Endothelial cell of umbilical vein (primary cell): ENCODE measurements at regions of chr1 and their contacts with region 1.

Region 1: DNA sequence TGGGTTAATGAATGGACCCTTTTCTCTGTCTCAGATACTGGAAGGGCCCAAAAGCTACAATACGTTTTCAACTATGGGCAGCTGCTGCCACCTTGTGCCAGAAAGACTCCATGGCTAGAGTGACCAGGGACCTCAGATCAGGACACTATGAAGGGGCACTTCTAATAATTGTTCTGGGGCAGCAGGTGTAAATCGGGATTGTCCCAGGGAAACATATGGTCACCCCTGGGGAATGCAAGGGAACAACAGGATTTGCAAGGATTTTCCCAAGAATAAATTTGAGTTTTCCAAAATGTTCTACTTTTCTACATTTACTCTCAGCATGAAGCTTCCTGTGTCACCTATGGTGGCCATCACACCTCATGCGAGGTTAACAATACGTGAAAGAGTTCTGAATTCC is 12.0 kb upstream of the FCAMR start:
- DNase-seq: peak; percentile 27
- H3K4me3 ChIP-seq: no peak overlapping the region
- H3K27ac ChIP-seq: no peak overlapping the region
- H3K4me1 ChIP-seq: no peaks in the 10 kb centered on the region
- H3K27me3 ChIP-seq: peaks cover 6 to 12% of the 10 kb centered on the region in 2 experiments
- CTCF ChIP-seq: peak; percentile 27 to 44
- POLR2A ChIP-seq: no peak

Region 2: DNA sequence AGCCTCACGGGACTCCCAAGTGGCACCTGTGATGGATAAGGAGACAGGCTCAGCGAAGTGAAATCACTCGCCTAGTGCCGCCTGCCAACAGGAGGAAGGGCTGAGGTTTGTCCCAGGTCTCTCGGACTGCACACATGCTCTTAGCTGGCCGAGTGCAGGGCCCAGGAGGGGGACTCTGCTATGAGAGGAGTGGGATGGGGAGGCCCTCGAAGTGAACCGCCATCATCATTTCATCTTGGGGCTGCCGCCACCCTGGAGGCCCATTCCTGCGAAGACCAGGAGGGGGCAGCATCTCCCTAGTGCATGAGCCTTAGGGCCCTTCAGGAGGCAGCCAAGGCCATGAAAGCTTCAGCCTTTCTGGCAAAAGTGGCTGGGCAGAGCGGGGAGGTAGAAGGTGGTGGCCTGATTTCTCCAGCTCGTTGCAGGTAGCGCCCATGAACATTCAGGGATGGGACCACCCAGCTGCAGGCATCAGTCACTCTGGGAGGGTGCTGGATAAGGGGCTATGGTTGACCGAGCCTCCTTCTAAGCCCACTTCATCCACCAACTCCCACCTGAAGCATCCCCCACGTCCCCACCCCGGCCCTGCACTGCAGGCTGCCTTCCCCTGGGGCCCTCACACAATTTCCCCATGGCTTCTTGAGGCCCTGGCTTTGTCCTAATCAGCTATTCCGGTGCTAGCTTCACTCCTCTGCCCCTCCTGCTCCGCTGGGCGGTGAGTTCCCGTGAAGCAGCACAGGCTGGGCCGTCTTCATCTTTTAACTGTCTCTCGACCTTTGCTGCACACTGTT is 492.0 kb before region 1 on chr1:
- CTCF ChIA-PET with region 1: interaction called, 16 read pairs
- POLR2A ChIA-PET with region 1: no interaction called
- dilution Hi-C with region 1: no loop called
- intact Hi-C with region 1: no loop called
- DNase-seq: peak; percentile 59
- H3K4me3 ChIP-seq: no peak overlapping the region
- H3K27ac ChIP-seq: no peak overlapping the region
- H3K4me1 ChIP-seq: peaks cover 8% of the 10 kb centered on the region
- H3K27me3 ChIP-seq: no peaks in the 10 kb centered on the region
- CTCF ChIP-seq: peak; percentile 83 to 92
- POLR2A ChIP-seq: no peak

Region 3: DNA sequence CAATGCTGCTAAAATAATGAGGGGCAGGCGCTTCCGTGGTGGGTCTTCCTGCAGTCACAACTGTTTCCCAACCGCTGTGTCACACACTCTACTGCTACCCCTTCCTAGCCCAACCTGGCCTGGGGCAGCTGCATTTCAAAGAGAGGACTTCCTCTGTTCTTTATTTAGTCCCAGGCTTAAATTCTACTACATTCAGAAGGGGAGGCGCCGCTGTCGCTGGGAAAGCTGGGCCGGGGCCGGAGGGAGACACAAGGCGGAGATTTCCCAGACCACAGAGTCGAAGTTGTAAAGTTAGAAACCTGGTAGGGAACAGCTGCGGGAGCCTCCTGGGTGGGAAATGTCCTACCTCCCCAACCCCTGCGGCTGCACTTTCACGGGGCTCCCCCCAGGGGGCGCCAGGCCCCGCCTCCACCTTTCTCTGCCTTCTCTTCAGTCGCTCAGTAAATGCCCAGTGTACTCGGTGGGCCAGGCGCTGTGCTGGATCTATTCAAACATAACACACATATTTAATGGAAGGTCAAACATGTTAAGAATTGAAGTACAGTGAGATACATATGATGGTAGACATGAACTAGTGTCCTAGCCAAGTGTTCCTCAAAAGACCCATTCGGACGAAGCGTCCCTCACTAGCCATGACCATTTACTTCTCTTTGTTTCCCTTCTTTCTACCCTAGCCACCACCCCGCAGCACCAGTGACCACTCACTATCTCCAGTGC is 323.8 kb before region 1 on chr1:
- CTCF ChIA-PET with region 1: interaction called, 11 read pairs
- POLR2A ChIA-PET with region 1: no interaction called
- dilution Hi-C with region 1: no loop called
- intact Hi-C with region 1: no loop called
- DNase-seq: peak; percentile 26
- H3K4me3 ChIP-seq: no peak overlapping the region
- H3K27ac ChIP-seq: no peak overlapping the region
- H3K4me1 ChIP-seq: no peaks in the 10 kb centered on the region
- H3K27me3 ChIP-seq: peaks cover 28 to 30% of the 10 kb centered on the region in 2 experiments
- CTCF ChIP-seq: peak; percentile 89 to 90
- POLR2A ChIP-seq: no peak

Region 4: GRCh38 chr1:206725109-206725963 is 256.9 kb before region 1 on chr1:
- CTCF ChIA-PET with region 1: interaction called, 4 read pairs
- POLR2A ChIA-PET with region 1: no interaction called
- dilution Hi-C with region 1: no loop called
- intact Hi-C with region 1: loop called (anchors 5 kb)
- DNase-seq: peak; percentile 31
- H3K4me3 ChIP-seq: no peak overlapping the region
- H3K27ac ChIP-seq: no peak overlapping the region
- H3K4me1 ChIP-seq: no peaks in the 10 kb centered on the region
- H3K27me3 ChIP-seq: no peaks in the 10 kb centered on the region
- CTCF ChIP-seq: peak; percentile 64 to 71
- POLR2A ChIP-seq: no peak

Region 5: DNA sequence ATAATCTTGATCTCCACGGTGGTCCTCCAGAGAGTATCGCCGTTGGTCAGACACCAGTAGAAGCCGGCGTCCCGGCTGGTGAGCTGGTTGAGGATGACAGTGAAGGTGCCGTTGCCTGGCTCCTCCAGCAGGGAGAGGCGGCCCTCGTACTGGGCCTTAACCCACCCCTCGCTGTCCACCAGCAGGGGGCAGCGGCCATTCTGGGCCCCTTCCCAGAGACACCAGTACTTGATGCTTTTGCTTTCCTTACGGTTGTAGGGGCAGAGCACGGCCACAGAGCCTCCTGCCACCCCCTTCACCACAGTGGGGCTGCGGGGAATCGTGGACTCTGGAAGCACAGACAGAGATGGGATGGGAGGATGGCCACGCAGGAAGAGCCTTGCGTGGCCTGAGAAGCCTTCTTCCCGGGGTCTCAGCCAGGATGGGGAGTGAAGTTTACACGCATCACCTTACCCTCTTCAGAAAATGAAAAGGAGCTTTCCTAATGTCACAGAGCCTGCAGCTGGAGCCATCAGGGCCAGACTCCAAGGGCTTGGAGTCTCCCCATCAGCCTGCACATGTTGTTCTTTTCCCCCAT is 46.6 kb before region 1 on chr1:
- CTCF ChIA-PET with region 1: interaction called, 34 read pairs
- POLR2A ChIA-PET with region 1: no interaction called
- dilution Hi-C with region 1: no loop called
- intact Hi-C with region 1: loop called (anchors 1 kb)
- DNase-seq: peak; percentile 25
- H3K4me3 ChIP-seq: no peak overlapping the region
- H3K27ac ChIP-seq: no peak overlapping the region
- H3K4me1 ChIP-seq: no peaks in the 10 kb centered on the region
- H3K27me3 ChIP-seq: no peaks in the 10 kb centered on the region
- CTCF ChIP-seq: peak; percentile 68 to 89
- POLR2A ChIP-seq: no peak

Region 6: GRCh38 chr1:206992790-206993189 is 10.6 kb after region 1 on chr1:
- CTCF ChIA-PET with region 1: interaction called, 20 read pairs
- POLR2A ChIA-PET with region 1: no interaction called
- dilution Hi-C with region 1: no loop called
- intact Hi-C with region 1: no loop called
- DNase-seq: no peak
- H3K4me3 ChIP-seq: no peak overlapping the region
- H3K27ac ChIP-seq: no peak overlapping the region
- H3K4me1 ChIP-seq: no peaks in the 10 kb centered on the region
- H3K27me3 ChIP-seq: peaks cover 2 to 8% of the 10 kb centered on the region in 2 experiments
- CTCF ChIP-seq: no peak
- POLR2A ChIP-seq: no peak